ENCODE measurements at regions of chr7 and their contacts with region 1.

Region 1: DNA sequence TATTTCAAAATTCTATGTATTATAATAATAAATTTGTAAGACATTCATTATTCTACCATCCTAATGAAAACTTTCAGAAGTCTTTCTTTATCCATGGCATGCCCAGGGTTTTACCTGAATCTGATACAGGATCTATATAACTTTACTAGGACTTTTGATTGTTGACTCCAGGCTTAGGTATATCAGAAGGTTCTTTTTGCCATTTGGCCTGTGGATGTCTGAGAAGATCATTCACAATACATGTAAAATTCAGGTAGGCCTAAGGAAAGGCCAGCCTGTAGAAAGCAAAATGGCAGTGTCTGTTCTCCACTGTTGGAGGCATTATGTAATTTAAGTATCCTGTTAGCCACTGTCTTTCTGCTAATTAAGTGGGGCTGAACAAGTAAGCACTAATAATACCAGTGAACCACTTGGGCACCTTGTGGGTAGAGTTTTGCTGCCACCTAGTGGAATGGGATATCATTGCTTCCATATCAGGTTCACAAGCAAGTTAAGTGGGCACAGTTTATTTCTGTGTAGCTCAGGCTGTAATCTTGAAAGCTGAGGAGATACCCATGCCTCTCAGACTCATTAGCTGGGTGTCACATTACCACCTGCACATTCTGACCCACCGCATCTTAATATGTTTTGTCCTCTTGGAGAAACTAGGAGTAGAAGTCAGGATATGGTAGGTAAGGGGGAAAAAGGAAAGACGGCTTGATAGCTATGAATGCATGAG is 105.5 kb downstream of the SEPTIN7 start:
- DNase-seq: peak; percentile 70 to 78 (median 73)
- H3K4me3 ChIP-seq: no peak overlapping the region
- H3K4me3 Mint-ChIP-seq: no peak overlapping the region
- H3K27ac ChIP-seq: no peak overlapping the region
- H3K27ac Mint-ChIP-seq: peak overlapping the region in 5 of 7 donors; percentile 2 to 69 (median 36)
- H3K4me1 ChIP-seq: no peaks in the 10 kb centered on the region
- H3K4me1 Mint-ChIP-seq: peaks cover 0 to 6% (median 3%) of the 10 kb centered on the region in 4 donors
- H3K27me3 ChIP-seq: no peaks in the 10 kb centered on the region
- H3K27me3 Mint-ChIP-seq: no peaks in the 10 kb centered on the region

Region 2: GRCh38 chr7:35424869-35425495 is 481.4 kb before region 1 on chr7:
- CTCF ChIA-PET with region 1: interaction called, 4 read pairs
- POLR2A ChIA-PET with region 1: no interaction called
- intact Hi-C with region 1: loop called (anchors 1 kb)
- DNase-seq: peak; percentile 45 to 54 (median 51)
- H3K4me3 ChIP-seq: no peak overlapping the region
- H3K4me3 Mint-ChIP-seq: no peak overlapping the region
- H3K27ac ChIP-seq: no peak overlapping the region
- H3K27ac Mint-ChIP-seq: peak overlapping the region in 1 of 7 donors; percentile 3
- H3K4me1 ChIP-seq: no peaks in the 10 kb centered on the region
- H3K4me1 Mint-ChIP-seq: peaks cover 0 to 3% (median 3%) of the 10 kb centered on the region in 4 donors
- H3K27me3 ChIP-seq: no peaks in the 10 kb centered on the region
- H3K27me3 Mint-ChIP-seq: peaks cover 13 to 15% of the 10 kb centered on the region in 2 donors

Region 3: DNA sequence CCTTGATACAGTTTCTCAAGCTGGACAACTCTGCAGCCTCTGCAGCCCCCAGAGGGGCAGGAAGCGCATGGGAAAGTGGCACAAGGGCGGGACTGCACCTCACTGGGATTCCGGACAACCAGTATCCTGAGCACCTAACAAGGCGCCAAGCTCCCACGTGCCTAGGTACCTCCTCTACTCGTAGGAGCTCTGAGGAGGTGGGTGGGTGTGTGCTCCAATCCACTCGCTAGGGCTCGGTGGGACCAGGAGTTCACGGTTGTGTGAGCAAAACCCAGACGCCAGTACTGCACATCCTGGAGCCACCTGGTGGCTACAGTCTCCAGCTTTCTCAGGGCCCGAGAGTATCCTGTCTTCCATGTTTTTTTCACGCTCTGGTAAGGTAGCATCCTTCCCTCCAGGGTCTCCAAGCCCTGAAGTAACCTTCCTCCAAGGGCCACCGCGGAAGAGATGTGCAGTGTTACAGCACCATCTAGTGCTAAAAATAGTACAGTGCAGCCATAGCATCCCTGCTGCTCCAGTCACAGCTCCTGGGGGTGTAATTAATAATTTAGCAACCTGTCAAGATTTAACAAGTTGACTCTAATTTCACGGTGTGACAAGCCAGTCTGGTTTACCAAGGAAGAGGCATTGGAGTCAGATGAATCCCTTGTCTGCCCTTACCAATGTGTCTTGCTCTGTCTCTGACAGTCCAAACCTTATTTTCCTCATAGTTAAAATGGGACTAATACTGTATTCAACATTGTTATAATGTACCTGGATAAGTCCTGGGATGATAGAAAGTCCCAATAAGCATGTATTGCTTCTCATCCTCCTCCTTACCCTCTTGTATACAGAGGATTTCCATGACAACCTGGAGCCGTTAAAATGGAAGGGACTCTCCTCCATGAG is 281.8 kb before region 1 on chr7:
- CTCF ChIA-PET with region 1: interaction called, 7 read pairs
- POLR2A ChIA-PET with region 1: no interaction called
- intact Hi-C with region 1: loop called (anchors 2 kb)
- DNase-seq: peak in 4 of 5 donors; percentile 36 to 40 (median 38)
- H3K4me3 ChIP-seq: no peak overlapping the region
- H3K4me3 Mint-ChIP-seq: peak overlapping the region in 1 of 8 donors; percentile 63
- H3K27ac ChIP-seq: no peak overlapping the region
- H3K27ac Mint-ChIP-seq: peak overlapping the region in 1 of 7 donors; percentile 17
- H3K4me1 ChIP-seq: peaks cover 4% of the 10 kb centered on the region
- H3K4me1 Mint-ChIP-seq: peaks cover 4 to 6% (median 5%) of the 10 kb centered on the region in 4 donors
- H3K27me3 ChIP-seq: no peaks in the 10 kb centered on the region
- H3K27me3 Mint-ChIP-seq: no peaks in the 10 kb centered on the region

Region 4: GRCh38 chr7:35694781-35695472 is 211.4 kb before region 1 on chr7 and contains the start of gene HERPUD2:
- CTCF ChIA-PET with region 1: interaction called, 9 read pairs
- POLR2A ChIA-PET with region 1: interaction called, 4 read pairs
- intact Hi-C with region 1: loop called (anchors 5 kb)
- DNase-seq: peak; percentile 91 to 94 (median 93)
- H3K4me3 ChIP-seq: peak within 1 kb of the TSS; percentile 90 to 98
- H3K4me3 Mint-ChIP-seq: peak within 1 kb of the TSS; percentile 94 to 99 (median 98)
- H3K27ac ChIP-seq: peak within 1 kb of the TSS; percentile 93
- H3K27ac Mint-ChIP-seq: peak within 1 kb of the TSS; percentile 86 to 100 (median 98)
- H3K4me1 ChIP-seq: peaks cover 33% of the 10 kb centered on the region
- H3K4me1 Mint-ChIP-seq: peaks cover 23 to 67% (median 39%) of the 10 kb centered on the region in 4 donors
- H3K27me3 ChIP-seq: no peaks in the 10 kb centered on the region
- H3K27me3 Mint-ChIP-seq: no peaks in the 10 kb centered on the region
- total RNA-seq, gene HERPUD2: 67.3 to 71.8 TPM

Region 5: GRCh38 chr7:35714862-35715261 is 191.5 kb before region 1 on chr7:
- CTCF ChIA-PET with region 1: interaction called, 48 read pairs
- POLR2A ChIA-PET with region 1: interaction called, 4 read pairs
- intact Hi-C with region 1: no loop called
- DNase-seq: no peak
- H3K4me3 ChIP-seq: no peak overlapping the region
- H3K4me3 Mint-ChIP-seq: no peak overlapping the region
- H3K27ac ChIP-seq: no peak overlapping the region
- H3K27ac Mint-ChIP-seq: peak overlapping the region in 1 of 7 donors; percentile 14
- H3K4me1 ChIP-seq: peaks cover 5% of the 10 kb centered on the region
- H3K4me1 Mint-ChIP-seq: peaks cover 0 to 8% (median 6%) of the 10 kb centered on the region in 4 donors
- H3K27me3 ChIP-seq: no peaks in the 10 kb centered on the region
- H3K27me3 Mint-ChIP-seq: no peaks in the 10 kb centered on the region

Region 6: DNA sequence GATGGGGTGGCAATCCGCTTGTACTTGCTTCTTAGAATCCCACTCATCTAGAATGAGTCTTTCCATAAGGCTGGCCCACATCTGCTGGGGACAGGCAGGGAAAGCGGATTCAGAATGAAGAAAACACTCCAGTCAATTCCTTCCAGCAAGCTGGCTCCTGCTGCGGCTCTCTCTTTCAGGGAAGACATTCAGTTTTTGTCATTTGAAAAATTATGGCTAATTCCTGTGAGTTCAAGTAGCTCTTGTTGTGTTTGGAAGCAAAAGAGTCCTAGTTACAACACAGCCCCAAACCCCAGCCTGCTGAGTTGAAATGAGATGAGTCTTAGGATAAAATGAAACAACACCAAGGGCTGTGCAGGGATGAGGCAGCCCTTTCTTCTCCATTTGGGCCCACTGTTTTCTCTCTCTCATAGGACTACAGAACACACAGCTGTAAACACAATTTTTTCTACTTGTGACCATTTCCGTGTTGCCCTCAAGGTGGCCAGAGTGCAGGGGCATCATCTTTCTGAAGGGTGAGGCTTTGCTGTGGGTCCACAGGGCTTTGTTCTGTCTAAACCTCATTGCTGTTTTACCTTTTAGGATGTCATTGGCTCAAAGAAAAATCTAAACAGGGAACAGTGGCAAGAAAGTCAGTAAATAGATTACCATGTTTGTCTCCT is 155.9 kb after region 1 on chr7:
- CTCF ChIA-PET with region 1: no interaction called
- POLR2A ChIA-PET with region 1: no interaction called
- intact Hi-C with region 1: no loop called
- DNase-seq: no peak
- H3K4me3 ChIP-seq: no peak overlapping the region
- H3K4me3 Mint-ChIP-seq: no peak overlapping the region
- H3K27ac ChIP-seq: no peak overlapping the region
- H3K27ac Mint-ChIP-seq: no peak overlapping the region
- H3K4me1 ChIP-seq: no peaks in the 10 kb centered on the region
- H3K4me1 Mint-ChIP-seq: no peaks in the 10 kb centered on the region
- H3K27me3 ChIP-seq: no peaks in the 10 kb centered on the region
- H3K27me3 Mint-ChIP-seq: peaks cover 0 to 2% of the 10 kb centered on the region in 2 donors

Measured in CD4-positive, alpha-beta memory T cell (primary cell).